Naive thymus-derived CD4-positive, alpha-beta T cell (primary cell): ENCODE measurements at regions of chr1 and their contacts with region 1.

Region 1: DNA sequence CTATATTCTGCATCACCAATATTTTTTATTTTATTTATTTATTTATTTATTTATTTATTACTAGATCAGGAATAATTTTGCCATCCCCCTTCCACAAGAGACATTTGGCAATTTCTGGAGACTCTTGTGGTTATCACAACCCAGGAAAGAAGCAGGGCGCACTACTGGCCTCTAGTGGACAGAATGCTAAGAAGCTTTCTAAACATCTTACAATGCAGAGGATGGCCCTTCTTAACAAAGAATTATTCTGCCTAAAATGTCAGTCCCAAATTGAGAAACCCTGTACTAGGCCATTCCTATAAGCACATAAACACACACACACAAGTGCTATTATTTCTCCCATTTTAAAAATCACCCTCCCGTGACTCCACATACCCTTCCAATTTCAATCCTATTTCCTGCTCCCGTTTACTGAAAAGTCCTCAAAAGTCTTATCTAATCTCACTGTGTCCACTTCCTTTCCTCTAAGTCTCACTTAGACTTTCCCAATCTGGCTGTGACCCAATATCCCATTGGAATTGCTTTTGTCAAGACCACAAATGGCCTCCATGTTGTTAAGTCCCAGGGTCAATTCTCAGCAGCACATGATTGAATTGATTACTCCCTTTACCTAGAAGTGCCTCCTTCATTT is 43.7 kb upstream of the RNF11 start:
- DNase-seq: peak in 8 of 9 donors; percentile 9 to 48 (median 32)
- ATAC-seq: peak; percentile 76
- H3K4me3 ChIP-seq: no peak overlapping the region
- H3K4me3 Mint-ChIP-seq: no peak overlapping the region
- H3K27ac ChIP-seq: no peak overlapping the region
- H3K27ac Mint-ChIP-seq: no peak overlapping the region
- H3K4me1 ChIP-seq: no peaks in the 10 kb centered on the region
- H3K4me1 Mint-ChIP-seq: no peaks in the 10 kb centered on the region
- H3K27me3 ChIP-seq: no peaks in the 10 kb centered on the region
- H3K27me3 Mint-ChIP-seq: peaks cover 0 to 17% (median 3%) of the 10 kb centered on the region in 5 donors

Region 2: DNA sequence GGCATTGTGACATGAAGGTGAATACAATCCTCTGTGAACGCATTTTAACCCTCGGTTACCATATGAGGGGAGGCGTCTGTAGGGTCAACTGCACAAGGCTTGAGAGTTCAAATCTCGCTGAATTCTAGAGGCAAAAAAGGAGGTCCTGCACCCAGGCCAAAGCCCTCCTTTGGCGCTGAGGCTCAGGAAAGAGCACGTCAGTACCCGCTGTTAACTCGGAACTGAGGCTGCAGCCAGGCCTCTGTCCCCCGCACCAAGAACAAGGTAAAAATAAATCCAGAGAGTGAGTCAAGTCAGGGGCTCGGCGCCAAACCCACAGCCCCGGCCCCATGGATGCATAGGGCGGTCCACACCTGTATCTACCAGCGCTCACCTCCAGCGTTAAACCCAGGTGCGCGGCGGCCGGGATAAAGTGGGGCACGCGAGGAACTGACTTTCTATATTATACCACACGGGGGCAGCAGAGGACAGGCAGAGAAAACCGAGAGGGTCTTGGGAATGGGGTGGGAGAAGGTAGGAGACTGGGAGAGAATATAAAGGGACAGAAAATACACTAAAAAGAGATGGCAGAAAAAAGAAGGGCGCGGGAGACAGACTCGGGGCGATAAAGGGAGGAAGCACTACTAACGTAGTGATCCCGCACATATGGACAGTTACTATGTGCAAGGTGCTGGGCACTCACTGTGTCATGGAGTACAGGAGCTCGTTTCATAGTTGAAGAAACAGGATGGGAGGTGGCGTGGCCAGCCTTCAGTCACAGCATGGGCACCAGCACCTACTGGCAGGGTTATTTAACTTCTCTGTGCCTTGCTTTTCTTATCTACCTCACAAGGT is 823.9 kb before region 1 on chr1:
- CTCF ChIA-PET with region 1: no interaction called
- POLR2A ChIA-PET with region 1: no interaction called
- intact Hi-C with region 1: loop called in 1 of 2 experiments (anchors 2 kb)
- DNase-seq: peak in 3 of 9 donors; percentile 5 to 49 (median 8)
- ATAC-seq: no peak
- H3K4me3 ChIP-seq: no peak overlapping the region
- H3K4me3 Mint-ChIP-seq: no peak overlapping the region
- H3K27ac ChIP-seq: no peak overlapping the region
- H3K27ac Mint-ChIP-seq: no peak overlapping the region
- H3K4me1 ChIP-seq: no peaks in the 10 kb centered on the region
- H3K4me1 Mint-ChIP-seq: peaks cover 0 to 5% (median 0%) of the 10 kb centered on the region in 7 donors
- H3K27me3 ChIP-seq: peaks cover 0 to 2% of the 10 kb centered on the region in 2 donors
- H3K27me3 Mint-ChIP-seq: peaks cover 40 to 58% (median 53%) of the 10 kb centered on the region in 5 donors

Region 3: DNA sequence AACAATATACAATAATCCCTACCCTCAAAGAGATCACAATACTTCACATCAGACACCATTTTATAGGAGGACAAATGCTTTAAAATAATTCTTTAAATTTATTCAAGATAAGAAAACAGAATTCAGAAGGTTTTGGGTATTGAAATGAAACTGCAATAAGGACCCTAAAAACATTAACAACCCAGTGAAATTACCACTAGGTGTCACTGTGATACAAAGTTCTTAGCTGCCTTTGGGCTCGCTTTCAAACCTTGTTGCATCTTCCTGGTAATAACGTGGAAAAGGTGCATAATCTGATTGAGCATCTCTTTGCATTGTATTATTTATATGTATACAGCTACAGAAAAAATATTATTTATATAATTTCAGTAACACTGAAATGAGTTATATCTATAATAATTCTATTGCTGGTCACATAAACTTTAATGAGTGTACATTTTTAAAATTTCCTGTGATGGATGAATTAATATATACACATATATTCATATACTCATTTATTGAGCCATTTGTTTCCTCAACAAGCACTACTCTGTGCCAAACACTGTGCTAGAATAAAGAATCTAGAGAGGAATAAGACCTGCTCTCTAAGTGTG is 417.5 kb before region 1 on chr1:
- CTCF ChIA-PET with region 1: interaction called, 86 read pairs
- POLR2A ChIA-PET with region 1: no interaction called
- intact Hi-C with region 1: loop called (anchors 1 kb)
- DNase-seq: peak in 7 of 9 donors; percentile 7 to 53 (median 36)
- ATAC-seq: peak; percentile 54
- H3K4me3 ChIP-seq: no peak overlapping the region
- H3K4me3 Mint-ChIP-seq: no peak overlapping the region
- H3K27ac ChIP-seq: no peak overlapping the region
- H3K27ac Mint-ChIP-seq: no peak overlapping the region
- H3K4me1 ChIP-seq: no peaks in the 10 kb centered on the region
- H3K4me1 Mint-ChIP-seq: peaks cover 4 to 22% (median 13%) of the 10 kb centered on the region in 7 donors
- H3K27me3 ChIP-seq: no peaks in the 10 kb centered on the region
- H3K27me3 Mint-ChIP-seq: no peaks in the 10 kb centered on the region

Region 4: DNA sequence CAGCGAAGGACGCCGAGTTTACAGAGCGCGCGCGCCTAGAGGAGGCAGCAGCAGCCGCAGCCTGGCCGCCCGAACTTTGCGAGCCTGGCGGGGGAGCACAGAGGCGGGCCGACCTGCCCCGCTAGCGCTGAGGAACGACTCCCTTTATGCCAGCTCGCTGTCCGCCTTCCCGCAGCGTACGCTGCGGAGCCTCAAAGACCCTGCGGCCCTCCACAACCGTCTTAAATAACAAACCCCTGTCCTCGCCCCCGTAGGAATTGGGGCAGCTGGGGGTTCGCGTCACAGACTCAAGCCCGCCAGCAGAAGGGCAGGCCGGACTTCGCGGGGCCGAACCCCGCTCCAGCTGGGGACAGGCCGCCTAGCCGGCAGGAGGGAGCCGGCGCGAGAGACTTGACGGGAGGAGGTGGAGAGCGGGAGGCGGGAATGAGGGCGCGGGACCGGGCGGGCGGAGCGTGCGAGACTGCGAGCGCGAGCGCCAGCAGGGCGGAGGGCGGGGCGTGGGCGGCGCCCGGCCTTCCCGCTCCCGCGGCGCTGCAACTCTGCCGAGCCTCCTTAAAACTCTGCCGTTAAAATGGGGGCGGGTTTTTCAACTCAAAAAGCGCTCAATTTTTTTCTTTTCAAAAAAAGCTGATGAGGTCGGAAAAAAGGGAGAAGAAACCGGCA is 224.0 kb before region 1 on chr1:
- CTCF ChIA-PET with region 1: no interaction called
- POLR2A ChIA-PET with region 1: no interaction called
- intact Hi-C with region 1: loop called in 1 of 2 experiments (anchors 2 kb)
- DNase-seq: peak; percentile 67 to 86 (median 85)
- ATAC-seq: peak; percentile 89
- H3K4me3 ChIP-seq: peak overlapping the region; percentile 83
- H3K4me3 Mint-ChIP-seq: peak overlapping the region; percentile 92 to 99 (median 98)
- H3K27ac ChIP-seq: peak overlapping the region; percentile 96
- H3K27ac Mint-ChIP-seq: peak overlapping the region; percentile 71 to 100 (median 91)
- H3K4me1 ChIP-seq: peaks cover 6 to 15% of the 10 kb centered on the region in 2 donors
- H3K4me1 Mint-ChIP-seq: peaks cover 18 to 29% (median 26%) of the 10 kb centered on the region in 7 donors
- H3K27me3 ChIP-seq: no peaks in the 10 kb centered on the region
- H3K27me3 Mint-ChIP-seq: peaks cover 0 to 12% (median 2%) of the 10 kb centered on the region in 5 donors

Region 5: DNA sequence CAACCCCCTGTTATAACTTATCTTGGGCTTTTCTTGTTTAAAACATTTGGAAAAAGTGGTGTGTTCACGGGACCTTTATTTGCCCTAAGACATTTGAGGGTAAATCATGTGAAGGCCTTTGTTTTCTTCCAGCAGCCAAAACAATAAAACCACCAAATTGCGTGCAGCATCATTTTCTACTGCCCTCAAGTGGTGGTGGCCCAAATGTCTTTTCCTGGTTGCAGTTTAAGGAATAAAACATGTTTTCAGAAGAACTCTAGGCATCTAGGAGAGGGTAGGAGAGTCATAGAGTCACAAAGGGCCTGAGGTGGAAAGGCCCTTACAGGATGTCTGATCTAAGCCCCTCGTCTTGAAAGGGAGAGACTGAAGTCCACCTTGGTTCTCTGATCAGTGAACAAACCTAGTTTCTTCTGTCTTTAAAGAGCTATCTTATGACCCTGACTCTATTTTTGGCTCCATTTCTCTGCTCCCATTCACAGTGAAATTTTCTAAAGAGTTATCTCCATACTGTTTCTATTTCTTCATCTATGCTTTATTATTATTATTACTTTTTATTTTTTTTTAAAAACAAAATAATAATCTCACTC is 342.8 kb after region 1 on chr1:
- CTCF ChIA-PET with region 1: no interaction called
- POLR2A ChIA-PET with region 1: no interaction called
- intact Hi-C with region 1: loop called in 1 of 2 experiments (anchors 2 kb)
- DNase-seq: peak in 6 of 9 donors; percentile 11 to 34 (median 25)
- ATAC-seq: peak; percentile 60
- H3K4me3 ChIP-seq: no peak overlapping the region
- H3K4me3 Mint-ChIP-seq: no peak overlapping the region
- H3K27ac ChIP-seq: no peak overlapping the region
- H3K27ac Mint-ChIP-seq: peak overlapping the region in 5 of 9 donors; percentile 8 to 84 (median 25)
- H3K4me1 ChIP-seq: peaks cover 0 to 8% of the 10 kb centered on the region in 2 donors
- H3K4me1 Mint-ChIP-seq: peaks cover 0 to 10% (median 2%) of the 10 kb centered on the region in 7 donors
- H3K27me3 ChIP-seq: no peaks in the 10 kb centered on the region
- H3K27me3 Mint-ChIP-seq: no peaks in the 10 kb centered on the region